Heart right ventricle (tissue), 16 donors: ENCODE measurements at regions of chr10 and their contacts with region 1.

Region 1: GRCh38 chr10:103181244-103181643 is 11.8 kb downstream of the NT5C2 start:
- DNase-seq: peak in 1 of 2 donors; percentile 44
- ATAC-seq: peak; percentile 24 to 87 (median 76)
- H3K4me3 ChIP-seq: no peak overlapping the region
- H3K27ac ChIP-seq: peak overlapping the region in 6 of 10 donors; percentile 25 to 76 (median 44)
- H3K4me1 ChIP-seq: peaks cover 2 to 75% (median 70%) of the 10 kb centered on the region in 9 donors
- H3K27me3 ChIP-seq: no peaks in the 10 kb centered on the region
- CTCF ChIP-seq: no peak

Region 2: GRCh38 chr10:103053659-103054581 is 127.3 kb before region 1 on chr10:
- intact Hi-C with region 1: loop called in 1 of 10 experiments (anchors 5 kb)
- DNase-seq: peak; percentile 46 to 67
- ATAC-seq: peak; percentile 75 to 95 (median 90)
- H3K4me3 ChIP-seq: peak overlapping the region in 8 of 10 donors; percentile 10 to 46 (median 38)
- H3K27ac ChIP-seq: peak overlapping the region in 7 of 10 donors; percentile 3 to 59 (median 45)
- H3K4me1 ChIP-seq: peaks cover 0 to 51% (median 25%) of the 10 kb centered on the region in 9 donors
- H3K27me3 ChIP-seq: no peaks in the 10 kb centered on the region
- CTCF ChIP-seq: peak in 8 of 9 donors; percentile 13 to 54 (median 44)

Region 3: DNA sequence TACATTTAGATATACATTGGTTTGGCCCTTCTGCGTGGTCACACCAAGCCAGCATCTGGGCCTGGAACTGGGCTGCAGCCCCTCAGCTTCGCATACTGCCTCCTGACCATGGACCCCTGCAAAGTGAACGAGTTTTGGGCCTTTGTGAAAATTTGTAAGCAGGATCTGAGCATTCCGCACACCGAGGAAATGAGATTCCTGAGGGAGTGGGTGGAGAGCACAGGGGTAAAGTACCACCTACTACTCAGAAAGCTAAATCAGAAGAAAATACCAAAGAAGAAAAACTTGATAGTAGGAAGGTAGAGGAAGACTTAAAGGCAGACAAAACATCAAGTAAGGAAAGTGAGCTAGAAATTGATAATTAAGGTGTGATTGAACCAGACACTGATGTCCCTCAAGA is 34.4 kb after region 1 on chr10:
- intact Hi-C with region 1: no loop called
- DNase-seq: no peak
- ATAC-seq: no peak
- H3K4me3 ChIP-seq: no peak overlapping the region
- H3K27ac ChIP-seq: no peak overlapping the region
- H3K4me1 ChIP-seq: no peaks in the 10 kb centered on the region
- H3K27me3 ChIP-seq: no peaks in the 10 kb centered on the region
- CTCF ChIP-seq: no peak

Region 4: GRCh38 chr10:103244663-103245271 is 63.5 kb after region 1 on chr10:
- intact Hi-C with region 1: no loop called
- DNase-seq: peak; percentile 48 to 76
- ATAC-seq: peak; percentile 86 to 94 (median 89)
- H3K4me3 ChIP-seq: no peak overlapping the region
- H3K27ac ChIP-seq: no peak overlapping the region
- H3K4me1 ChIP-seq: peaks cover 6 to 33% (median 8%) of the 10 kb centered on the region in 9 donors
- H3K27me3 ChIP-seq: no peaks in the 10 kb centered on the region
- CTCF ChIP-seq: peak; percentile 70 to 94 (median 90)

Region 5: GRCh38 chr10:103333925-103334520 is 152.8 kb after region 1 on chr10:
- intact Hi-C with region 1: no loop called
- DNase-seq: no peak
- ATAC-seq: no peak
- H3K4me3 ChIP-seq: no peak overlapping the region
- H3K27ac ChIP-seq: no peak overlapping the region
- H3K4me1 ChIP-seq: no peaks in the 10 kb centered on the region
- H3K27me3 ChIP-seq: no peaks in the 10 kb centered on the region
- CTCF ChIP-seq: peak; percentile 23 to 68 (median 58)